ENCODE measurements at regions of chr10 and their contacts with region 1.

Region 1: GRCh38 chr10:11986593-11987216 is 55.9 kb downstream of the UPF2 start:
- DNase-seq: peak; percentile 65
- H3K4me3 ChIP-seq: no peak overlapping the region
- H3K27ac ChIP-seq: no peak overlapping the region
- H3K4me1 ChIP-seq: no peaks in the 10 kb centered on the region
- H3K27me3 ChIP-seq: no peaks in the 10 kb centered on the region
- CTCF ChIP-seq: peak; percentile 86 to 90

Region 2: DNA sequence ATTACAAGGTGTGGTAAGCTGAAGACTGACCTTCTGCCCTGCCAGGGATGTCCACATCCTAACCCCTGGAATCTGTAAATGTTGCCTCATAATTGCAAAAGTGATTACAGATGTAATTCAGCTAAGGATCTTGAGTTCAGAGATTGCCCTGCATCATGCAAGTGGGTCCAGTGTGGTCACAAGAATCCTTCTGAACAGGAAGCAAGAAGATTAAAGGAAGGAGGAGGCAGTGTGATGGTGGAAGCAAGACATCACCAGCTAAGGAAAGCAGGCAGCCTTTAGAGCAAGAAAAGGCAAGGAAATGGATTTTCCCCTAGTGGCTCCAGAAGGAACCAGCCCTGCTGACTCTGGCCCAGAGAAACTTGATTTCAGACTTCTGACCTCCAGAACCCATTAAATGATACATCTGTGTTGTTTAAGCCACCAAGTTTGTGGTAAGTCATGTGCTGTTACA is 453.4 kb before region 1 on chr10:
- CTCF ChIA-PET with region 1: no interaction called
- dilution Hi-C with region 1: no loop called
- in situ Hi-C with region 1: no loop called
- intact Hi-C with region 1: no loop called
- DNase-seq: peak; percentile 38
- H3K4me3 ChIP-seq: no peak overlapping the region
- H3K27ac ChIP-seq: peak overlapping the region; percentile 56
- H3K4me1 ChIP-seq: peaks cover 21% of the 10 kb centered on the region
- H3K27me3 ChIP-seq: no peaks in the 10 kb centered on the region
- CTCF ChIP-seq: peak; percentile 45 to 55

Region 3: GRCh38 chr10:11793762-11794479 is 192.8 kb before region 1 on chr10:
- CTCF ChIA-PET with region 1: no interaction called
- dilution Hi-C with region 1: no loop called
- in situ Hi-C with region 1: loop called (anchors 5 kb)
- intact Hi-C with region 1: loop called (anchors 1 kb)
- DNase-seq: peak; percentile 40
- H3K4me3 ChIP-seq: no peak overlapping the region
- H3K27ac ChIP-seq: peak overlapping the region; percentile 7
- H3K4me1 ChIP-seq: peaks cover 8% of the 10 kb centered on the region
- H3K27me3 ChIP-seq: no peaks in the 10 kb centered on the region
- CTCF ChIP-seq: no peak

Region 4: GRCh38 chr10:11921800-11922392 is 64.8 kb before region 1 on chr10:
- CTCF ChIA-PET with region 1: interaction called, 10 read pairs
- dilution Hi-C with region 1: no loop called
- in situ Hi-C with region 1: no loop called
- intact Hi-C with region 1: no loop called
- DNase-seq: no peak
- H3K4me3 ChIP-seq: no peak overlapping the region
- H3K27ac ChIP-seq: no peak overlapping the region
- H3K4me1 ChIP-seq: no peaks in the 10 kb centered on the region
- H3K27me3 ChIP-seq: no peaks in the 10 kb centered on the region
- CTCF ChIP-seq: no peak

Measured in mammary epithelial cell (primary cell).